IMR-90 (cell line): ENCODE measurements at regions of chr9 and their contacts with region 1.

Region 1: GRCh38 chr9:112711050-112711689 is 6.7 kb downstream of the INIP start:
- DNase-seq: peak; percentile 64
- ATAC-seq: peak; percentile 82
- H3K4me3 ChIP-seq: no peak overlapping the region
- H3K27ac ChIP-seq: no peak overlapping the region
- H3K4me1 ChIP-seq: no peaks in the 10 kb centered on the region
- H3K27me3 ChIP-seq: no peaks in the 10 kb centered on the region
- CTCF ChIP-seq: peak; percentile 77
- POLR2A ChIP-seq: no peak
- RAD21 ChIP-seq: peak; percentile 78

Region 2: DNA sequence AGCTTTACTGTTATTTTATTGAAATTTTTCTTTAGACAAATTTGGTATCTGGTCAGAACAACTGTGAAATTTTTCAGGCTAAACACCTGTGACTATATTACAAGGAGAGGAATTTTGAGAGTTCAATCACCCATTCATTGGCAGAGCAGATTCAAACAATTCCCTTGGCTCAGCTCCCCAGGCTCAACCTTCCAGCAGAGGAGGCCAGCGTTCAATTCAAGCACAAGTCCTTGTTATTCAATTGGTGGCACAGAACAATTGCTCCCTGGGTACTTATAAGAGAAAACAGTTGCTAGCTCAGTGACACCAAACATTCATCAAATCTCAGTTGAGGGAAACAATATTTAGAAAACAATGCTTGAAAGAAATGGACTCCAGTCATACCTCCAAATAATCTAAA is 619.4 kb before region 1 on chr9:
- CTCF ChIA-PET with region 1: no interaction called
- POLR2A ChIA-PET with region 1: no interaction called
- dilution Hi-C with region 1: no loop called
- in situ Hi-C with region 1: loop called (anchors 25 kb)
- intact Hi-C with region 1: loop called (anchors 5 kb)
- DNase-seq: peak; percentile 36
- ATAC-seq: peak; percentile 53
- H3K4me3 ChIP-seq: no peak overlapping the region
- H3K27ac ChIP-seq: no peak overlapping the region
- H3K4me1 ChIP-seq: no peaks in the 10 kb centered on the region
- H3K27me3 ChIP-seq: no peaks in the 10 kb centered on the region
- CTCF ChIP-seq: peak; percentile 51
- POLR2A ChIP-seq: no peak
- RAD21 ChIP-seq: peak; percentile 54

Region 3: DNA sequence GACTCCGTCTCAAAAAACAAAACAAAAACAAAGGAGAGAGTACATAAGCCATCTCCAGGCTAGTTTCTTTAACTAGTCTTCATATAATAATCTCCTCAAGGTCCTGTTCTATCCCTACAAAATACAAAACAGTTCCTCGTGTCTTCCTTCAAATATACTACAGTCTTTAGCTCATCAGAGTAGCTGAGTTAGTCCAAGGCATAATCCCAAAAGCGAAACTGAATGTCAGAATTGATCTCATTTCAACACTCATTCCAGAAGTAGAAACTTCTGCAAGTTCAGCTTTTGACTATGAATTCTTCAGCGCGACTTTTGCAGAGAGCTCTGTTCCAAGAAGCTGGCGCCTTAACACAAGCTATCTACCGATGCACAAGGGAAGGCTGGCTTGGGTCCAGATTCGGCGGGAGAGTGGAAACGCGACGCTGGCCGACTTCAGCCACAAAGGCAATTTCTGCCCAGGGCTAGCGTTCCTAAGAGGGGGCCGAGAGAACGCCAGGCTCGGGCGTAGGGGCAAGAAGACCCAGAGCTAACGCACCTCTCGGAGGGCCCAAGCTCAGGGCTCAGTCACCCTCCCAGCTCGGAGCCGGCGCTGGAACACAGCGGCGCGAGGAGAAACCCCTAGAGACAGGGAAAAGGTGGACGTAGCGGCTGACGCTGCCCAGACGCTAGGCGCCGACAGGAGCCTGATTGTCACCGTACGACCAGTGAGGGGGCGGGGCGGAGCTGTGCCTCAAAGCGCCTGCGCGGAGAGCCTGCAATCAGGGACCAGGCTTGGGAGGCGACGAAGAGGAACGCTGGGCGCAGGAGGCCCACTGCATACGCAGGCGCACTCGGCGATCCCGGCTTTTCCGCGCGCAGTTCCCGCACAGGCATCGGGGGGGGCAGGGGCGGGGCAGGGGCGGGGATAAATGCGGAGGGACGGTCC is 331.7 kb before region 1 on chr9:
- CTCF ChIA-PET with region 1: no interaction called
- POLR2A ChIA-PET with region 1: no interaction called
- dilution Hi-C with region 1: no loop called
- in situ Hi-C with region 1: no loop called
- intact Hi-C with region 1: loop called (anchors 5 kb)
- DNase-seq: peak; percentile 97
- ATAC-seq: peak; percentile 94
- H3K4me3 ChIP-seq: peak overlapping the region; percentile 75
- H3K27ac ChIP-seq: peak overlapping the region; percentile 94
- H3K4me1 ChIP-seq: peaks cover 3% of the 10 kb centered on the region; the same call in 1 of the 2 replicates
- H3K27me3 ChIP-seq: no peaks in the 10 kb centered on the region
- CTCF ChIP-seq: 0 out of 2 replicates have a peak, but pooled peaks have one; percentile 6
- POLR2A ChIP-seq: peak; percentile 96
- RAD21 ChIP-seq: 0 out of 2 replicates have a peak, but pooled peaks have one; percentile 2

Region 4: GRCh38 chr9:112443200-112443599 is 268.0 kb before region 1 on chr9:
- CTCF ChIA-PET with region 1: no interaction called
- POLR2A ChIA-PET with region 1: interaction called, 7 read pairs
- dilution Hi-C with region 1: no loop called
- in situ Hi-C with region 1: no loop called
- intact Hi-C with region 1: loop called (anchors 2 kb)
- DNase-seq: peak; percentile 15
- ATAC-seq: no peak
- H3K4me3 ChIP-seq: no peak overlapping the region
- H3K27ac ChIP-seq: no peak overlapping the region
- H3K4me1 ChIP-seq: peaks cover 5% of the 10 kb centered on the region; the same call in 1 of the 2 replicates
- H3K27me3 ChIP-seq: no peaks in the 10 kb centered on the region
- CTCF ChIP-seq: peak; percentile 43
- POLR2A ChIP-seq: no peak
- RAD21 ChIP-seq: peak; percentile 43; the same call in 1 of the 2 replicates

Region 5: GRCh38 chr9:112486221-112487007 is 224.8 kb before region 1 on chr9 and contains the start of gene KIAA1958:
- CTCF ChIA-PET with region 1: no interaction called
- POLR2A ChIA-PET with region 1: no interaction called
- dilution Hi-C with region 1: no loop called
- in situ Hi-C with region 1: no loop called
- intact Hi-C with region 1: loop called (anchors 2 kb)
- DNase-seq: peak; percentile 73
- ATAC-seq: peak; percentile 91
- H3K4me3 ChIP-seq: peak within 1 kb of the TSS; percentile 77
- H3K27ac ChIP-seq: peak within 1 kb of the TSS; percentile 68
- H3K4me1 ChIP-seq: peaks cover 6% of the 10 kb centered on the region; the same call in 1 of the 2 replicates
- H3K27me3 ChIP-seq: no peaks in the 10 kb centered on the region
- CTCF ChIP-seq: no peak
- POLR2A ChIP-seq: no peak
- RAD21 ChIP-seq: no peak
- total RNA-seq, gene KIAA1958: 1.4 and 1.8 TPM in 2 replicates